SK-N-SH (cell line): ENCODE measurements at regions of chr5 and their contacts with region 1.

Region 1: DNA sequence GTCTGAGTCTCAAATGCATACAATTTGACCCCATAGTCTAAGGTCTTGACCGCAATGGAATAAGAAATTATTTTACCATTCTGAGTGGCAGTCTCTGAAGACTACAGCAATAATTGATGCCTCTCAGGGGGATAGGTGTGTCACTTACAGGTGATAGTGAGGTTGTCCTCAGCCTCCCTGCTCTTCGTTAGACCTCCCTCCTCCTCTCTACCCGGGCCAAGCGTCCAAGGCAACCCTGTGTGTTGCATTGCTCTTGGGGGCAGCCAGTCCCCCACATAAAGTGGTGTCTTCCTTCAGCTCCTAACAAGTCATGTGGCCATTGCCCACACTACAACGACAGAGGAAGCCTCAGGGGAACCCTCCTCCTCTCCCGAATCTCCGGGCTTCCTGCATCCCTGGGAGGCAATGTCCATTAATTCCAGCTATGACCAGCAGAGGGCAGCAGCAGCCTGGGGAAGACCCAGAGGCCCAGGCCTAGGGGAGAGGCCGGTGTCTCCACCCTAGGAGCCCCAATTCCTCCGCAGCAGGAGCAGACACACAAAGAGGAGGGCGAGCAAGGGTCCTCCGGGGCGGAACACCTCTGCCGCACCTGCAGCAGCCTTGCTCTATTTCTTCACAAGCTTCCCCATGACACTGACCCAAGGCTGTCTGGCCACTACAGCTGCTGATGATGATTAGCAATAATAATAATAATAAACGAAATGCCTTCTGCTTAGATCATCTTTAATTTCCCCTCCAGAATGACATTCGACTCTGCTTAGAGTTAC is 134.8 kb downstream of the KCNIP1 start:
- DNase-seq: peak; percentile 87
- H3K4me3 ChIP-seq: no peak overlapping the region; a peak in 1 of 4 replicates
- H3K27ac ChIP-seq: no peak overlapping the region
- H3K4me1 ChIP-seq: peaks cover 7% of the 10 kb centered on the region in 2 experiments; a peak in 2 of 4 replicates
- H3K27me3 ChIP-seq: no peaks in the 10 kb centered on the region; the same call in 1 of the 2 replicates
- CTCF ChIP-seq: peak; percentile 87
- EP300 ChIP-seq: no peak
- RAD21 ChIP-seq: peak; percentile 86

Region 2: GRCh38 chr5:170434966-170435605 is 203.6 kb before region 1 on chr5:
- CTCF ChIA-PET with region 1: interaction called, 166 read pairs
- POLR2A ChIA-PET with region 1: no interaction called
- DNase-seq: peak; percentile 85
- H3K4me3 ChIP-seq: peak overlapping the region in 1 of 2 experiments; percentile 38; a peak in 1 of 4 replicates
- H3K27ac ChIP-seq: no peak overlapping the region
- H3K4me1 ChIP-seq: peaks cover 0 to 8% of the 10 kb centered on the region in 2 experiments; a peak in 1 of 4 replicates
- H3K27me3 ChIP-seq: no peaks in the 10 kb centered on the region
- CTCF ChIP-seq: peak; percentile 97
- EP300 ChIP-seq: no peak
- RAD21 ChIP-seq: peak; percentile 95

Region 3: GRCh38 chr5:170623576-170624181 is 15.0 kb before region 1 on chr5:
- CTCF ChIA-PET with region 1: interaction called, 81 read pairs
- POLR2A ChIA-PET with region 1: no interaction called
- DNase-seq: peak; percentile 63
- H3K4me3 ChIP-seq: no peak overlapping the region; a peak in 1 of 4 replicates
- H3K27ac ChIP-seq: no peak overlapping the region
- H3K4me1 ChIP-seq: peaks cover 0 to 5% of the 10 kb centered on the region in 2 experiments; a peak in 1 of 4 replicates
- H3K27me3 ChIP-seq: no peaks in the 10 kb centered on the region
- CTCF ChIP-seq: peak; percentile 81
- EP300 ChIP-seq: no peak
- RAD21 ChIP-seq: peak; percentile 89

Region 4: GRCh38 chr5:170681013-170681433 is 42.4 kb after region 1 on chr5:
- CTCF ChIA-PET with region 1: interaction called, 14 read pairs
- POLR2A ChIA-PET with region 1: no interaction called
- DNase-seq: peak; percentile 57
- H3K4me3 ChIP-seq: peak overlapping the region; percentile 23 to 49; a peak in 3 of 4 replicates
- H3K27ac ChIP-seq: no peak overlapping the region
- H3K4me1 ChIP-seq: peaks cover 0 to 3% of the 10 kb centered on the region in 2 experiments; a peak in 1 of 4 replicates
- H3K27me3 ChIP-seq: no peaks in the 10 kb centered on the region; the same call in 1 of the 2 replicates
- CTCF ChIP-seq: no peak
- EP300 ChIP-seq: no peak
- RAD21 ChIP-seq: no peak

Region 5: DNA sequence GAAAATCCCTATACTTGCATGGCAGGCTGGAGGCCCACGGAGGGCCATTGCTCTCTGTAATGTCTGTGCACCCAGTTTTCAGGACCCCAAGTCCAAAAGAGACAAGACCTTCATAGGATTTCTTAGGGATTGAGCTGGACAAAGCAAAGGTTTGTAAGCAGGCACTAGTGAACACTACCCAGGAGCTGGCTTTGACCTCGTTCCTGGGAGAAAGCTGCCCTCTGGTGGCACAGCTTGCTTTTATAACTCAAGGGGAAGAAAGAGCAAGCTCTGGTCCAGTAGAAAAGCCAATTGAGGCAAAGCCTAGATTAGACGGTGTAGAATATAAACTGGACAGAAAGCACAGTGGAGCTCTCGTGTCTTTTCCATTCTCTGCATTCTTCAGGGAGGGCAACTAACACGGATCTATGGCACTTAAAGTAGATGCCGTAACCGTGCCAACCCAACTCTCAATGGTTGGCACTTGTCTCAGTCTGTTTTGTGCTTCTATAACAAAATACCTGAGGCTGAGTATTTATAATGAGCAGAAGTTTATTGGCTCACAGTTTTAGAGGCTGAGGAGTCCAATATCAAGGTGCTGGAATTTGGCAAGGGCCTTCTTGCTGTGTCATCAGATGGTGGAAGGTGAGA is 152.8 kb after region 1 on chr5:
- CTCF ChIA-PET with region 1: interaction called, 98 read pairs
- POLR2A ChIA-PET with region 1: no interaction called
- DNase-seq: peak; percentile 76
- H3K4me3 ChIP-seq: no peak overlapping the region; a peak in 1 of 4 replicates
- H3K27ac ChIP-seq: no peak overlapping the region
- H3K4me1 ChIP-seq: peaks cover 0 to 5% of the 10 kb centered on the region in 2 experiments; a peak in 1 of 4 replicates
- H3K27me3 ChIP-seq: no peaks in the 10 kb centered on the region; the same call in 1 of the 2 replicates
- CTCF ChIP-seq: peak; percentile 63
- EP300 ChIP-seq: no peak
- RAD21 ChIP-seq: peak; percentile 96